Common myeloid progenitor, CD34-positive (primary cell): ENCODE measurements at regions of chr1 and their contacts with region 1.

Region 1: GRCh38 chr1:207963427-207964194 is 52.7 kb upstream of the CD34 start:
- DNase-seq: peak; percentile 76 to 90 (median 90)
- H3K4me3 ChIP-seq: peak overlapping the region; percentile 11 to 76 (median 68)
- H3K27ac ChIP-seq: peak overlapping the region; percentile 40 to 80
- H3K4me1 ChIP-seq: peaks cover 4 to 47% (median 30%) of the 10 kb centered on the region in 4 experiments
- H3K27me3 ChIP-seq: no peaks in the 10 kb centered on the region

Region 2: GRCh38 chr1:207828485-207829158 is 135.0 kb before region 1 on chr1:
- CTCF ChIA-PET with region 1: interaction called, 13 read pairs
- POLR2A ChIA-PET with region 1: no interaction called
- DNase-seq: peak; percentile 96
- H3K4me3 ChIP-seq: peak overlapping the region in 1 of 7 experiments; percentile 30
- H3K27ac ChIP-seq: peak overlapping the region in 1 of 2 experiments; percentile 37
- H3K4me1 ChIP-seq: peaks cover 54 to 92% (median 87%) of the 10 kb centered on the region in 4 experiments
- H3K27me3 ChIP-seq: no peaks in the 10 kb centered on the region

Region 3: DNA sequence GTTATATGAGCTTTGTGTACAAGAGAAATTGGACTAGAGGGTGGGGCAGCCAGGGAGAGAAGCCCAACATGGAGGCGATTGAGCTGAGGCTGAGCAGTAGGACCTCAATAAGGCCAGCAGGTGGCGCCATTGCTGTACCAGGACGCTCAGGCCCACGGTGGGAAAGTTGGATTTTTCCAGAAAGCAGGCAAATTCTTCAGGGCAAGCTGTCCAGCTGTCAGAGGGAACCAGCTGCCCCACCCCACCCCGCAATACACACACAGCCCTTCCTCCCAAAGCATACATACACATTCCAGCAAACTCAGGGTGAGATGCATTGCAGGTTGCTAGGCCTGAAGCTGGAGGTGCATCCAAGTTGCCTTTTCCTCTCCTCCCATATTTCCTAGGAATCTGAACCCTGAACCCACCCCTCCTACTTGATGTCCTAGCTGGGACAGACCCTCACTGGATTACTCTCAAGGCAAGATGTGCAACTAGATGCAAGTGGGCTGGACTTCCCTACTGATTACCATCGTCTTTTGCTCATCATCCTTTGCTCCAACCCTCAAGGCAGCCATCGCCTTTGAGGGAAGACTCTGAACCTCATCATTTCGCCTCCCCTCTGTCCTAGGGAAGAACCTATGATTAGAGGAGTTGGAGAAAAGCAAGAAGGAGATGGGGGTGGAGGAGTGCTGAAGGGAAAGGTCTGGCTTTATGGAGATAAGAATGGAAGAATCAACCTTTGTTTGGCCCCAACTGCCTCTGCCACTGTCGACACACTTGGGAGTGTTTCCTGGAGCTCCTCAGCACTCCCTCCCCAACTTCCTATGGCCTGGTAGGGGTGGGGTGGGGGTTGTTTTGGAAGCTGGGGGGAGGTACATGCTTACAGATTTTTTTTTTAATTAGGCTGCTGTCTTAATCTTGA is 78.2 kb before region 1 on chr1:
- CTCF ChIA-PET with region 1: interaction called, 494 read pairs
- POLR2A ChIA-PET with region 1: interaction called, 3 read pairs
- DNase-seq: peak; percentile 75 to 87 (median 86)
- H3K4me3 ChIP-seq: no peak overlapping the region
- H3K27ac ChIP-seq: no peak overlapping the region
- H3K4me1 ChIP-seq: peaks cover 7 to 77% (median 64%) of the 10 kb centered on the region in 4 experiments
- H3K27me3 ChIP-seq: no peaks in the 10 kb centered on the region

Region 4: DNA sequence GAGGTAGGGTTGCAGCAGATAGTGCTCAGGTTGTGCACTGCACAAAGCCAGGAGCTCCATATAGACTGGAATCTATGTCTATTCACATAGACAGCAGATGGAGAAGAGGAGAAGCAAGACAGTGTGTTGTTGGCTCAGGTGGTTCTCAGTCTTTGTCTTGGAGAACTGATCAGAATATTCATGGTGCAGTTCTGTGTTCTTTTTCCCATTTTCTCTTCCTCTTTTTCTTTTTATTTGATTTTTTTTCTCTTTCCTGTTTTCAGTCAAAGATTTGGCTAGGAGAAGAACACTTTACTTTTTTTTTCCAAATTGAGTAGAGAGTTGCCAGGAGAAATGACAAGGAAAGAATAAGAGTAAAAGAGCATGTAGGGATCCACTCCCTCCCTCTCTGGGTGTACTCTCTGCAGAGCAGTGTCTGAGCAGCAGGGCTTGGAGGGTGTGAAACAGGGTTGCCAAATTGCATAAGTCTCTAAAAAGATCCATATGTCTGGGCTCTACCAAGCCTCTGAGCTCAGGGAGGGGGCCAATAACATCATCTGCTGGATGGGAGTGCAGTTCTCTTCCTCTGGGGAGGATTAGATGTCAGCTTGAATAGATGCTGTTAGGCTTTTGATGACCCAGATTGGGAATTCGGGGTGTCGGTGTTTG is 44.0 kb before region 1 on chr1:
- CTCF ChIA-PET with region 1: interaction called, 494 read pairs
- POLR2A ChIA-PET with region 1: interaction called, 12 read pairs
- DNase-seq: peak in 2 of 3 donors; percentile 52 to 69
- H3K4me3 ChIP-seq: peak overlapping the region in 3 of 7 experiments; percentile 2 to 60 (median 12)
- H3K27ac ChIP-seq: no peak overlapping the region
- H3K4me1 ChIP-seq: peaks cover 47 to 90% (median 78%) of the 10 kb centered on the region in 4 experiments
- H3K27me3 ChIP-seq: no peaks in the 10 kb centered on the region

Region 5: GRCh38 chr1:207935166-207935583 is 28.4 kb before region 1 on chr1:
- CTCF ChIA-PET with region 1: interaction called, 12 read pairs
- POLR2A ChIA-PET with region 1: no interaction called
- DNase-seq: peak; percentile 39 to 84 (median 65)
- H3K4me3 ChIP-seq: no peak overlapping the region
- H3K27ac ChIP-seq: no peak overlapping the region
- H3K4me1 ChIP-seq: peaks cover 0 to 21% (median 12%) of the 10 kb centered on the region in 4 experiments
- H3K27me3 ChIP-seq: no peaks in the 10 kb centered on the region

Region 6: DNA sequence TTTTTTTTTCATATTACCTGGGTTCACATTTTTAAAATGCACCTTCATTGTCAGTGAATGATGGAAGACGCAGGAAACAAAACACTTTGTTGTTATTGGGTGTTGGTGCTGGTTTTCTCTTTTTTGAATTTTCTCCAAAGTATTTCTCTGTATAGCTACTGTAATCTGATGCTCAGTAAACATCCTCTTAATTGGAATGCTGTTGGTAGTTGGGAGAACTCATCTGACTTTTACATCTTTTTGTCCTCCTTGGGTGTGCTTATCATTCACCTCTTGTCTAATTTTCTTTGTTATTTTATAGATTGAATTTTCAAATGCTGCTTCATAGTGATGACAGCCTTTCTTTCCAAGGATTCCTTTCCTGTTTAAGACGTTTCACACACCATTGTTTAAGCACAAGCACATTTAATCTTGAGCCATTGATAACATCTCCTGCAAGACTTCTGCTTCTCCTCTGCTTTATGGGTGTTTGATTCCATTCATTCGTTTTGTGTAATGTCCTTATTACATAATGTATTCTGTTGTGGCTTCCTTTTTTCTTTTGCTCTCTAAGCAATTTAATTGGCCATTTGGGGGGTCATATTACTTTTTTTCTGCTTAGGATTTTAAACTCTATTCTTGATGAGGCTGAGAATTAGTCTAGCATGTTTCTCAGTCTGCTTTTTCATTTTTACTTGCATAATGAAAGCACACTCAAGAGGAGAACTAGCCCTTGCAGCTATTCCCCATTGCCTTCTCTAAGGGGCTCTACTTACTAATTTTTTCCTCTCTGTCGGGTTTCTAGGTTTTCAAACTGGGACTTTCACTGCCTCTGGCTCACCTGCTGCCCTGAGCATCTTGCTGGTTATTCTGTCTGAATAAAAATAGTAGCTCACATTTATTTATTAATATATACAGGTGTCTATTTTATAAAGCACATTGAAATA is 10.7 kb before region 1 on chr1:
- CTCF ChIA-PET with region 1: interaction called, 12 read pairs
- POLR2A ChIA-PET with region 1: no interaction called
- DNase-seq: no peak
- H3K4me3 ChIP-seq: no peak overlapping the region
- H3K27ac ChIP-seq: no peak overlapping the region
- H3K4me1 ChIP-seq: peaks cover 0 to 26% (median 13%) of the 10 kb centered on the region in 4 experiments
- H3K27me3 ChIP-seq: no peaks in the 10 kb centered on the region